OCI-LY7 (cell line): ENCODE measurements at regions of chr9 and their contacts with region 1.

Region 1: GRCh38 chr9:33290247-33291030 is at the start of gene NFX1:
- DNase-seq: peak; percentile 99
- H3K4me3 ChIP-seq: peak within 1 kb of the TSS; percentile 88
- H3K27ac ChIP-seq: peak within 1 kb of the TSS; percentile 97
- H3K4me1 ChIP-seq: peaks cover 62% of the 10 kb centered on the region
- CTCF ChIP-seq: no peak
- total RNA-seq, gene NFX1: 32.3 and 35.8 TPM in 2 replicates

Region 2: DNA sequence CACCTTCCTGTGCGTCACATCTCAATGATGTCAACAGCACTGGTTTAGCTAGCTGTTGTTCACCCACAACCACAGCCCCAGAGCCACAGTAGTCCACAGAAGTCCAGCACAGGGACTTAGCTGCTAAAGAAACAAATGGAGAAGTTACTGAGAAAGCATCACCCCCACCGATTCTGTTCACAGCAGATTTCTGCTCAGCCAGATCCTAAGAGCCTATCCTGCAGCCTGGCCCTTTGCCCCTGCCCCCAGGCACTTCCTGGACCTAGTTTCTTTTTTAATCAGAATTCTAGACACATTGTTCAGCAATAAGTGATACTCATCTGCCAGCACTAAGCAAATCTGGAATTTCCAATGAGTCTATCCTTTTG is 130.7 kb before region 1 on chr9:
- CTCF ChIA-PET with region 1: no interaction called
- POLR2A ChIA-PET with region 1: no interaction called
- intact Hi-C with region 1: loop called (anchors 10 kb)
- DNase-seq: peak; percentile 50
- H3K4me3 ChIP-seq: peak overlapping the region; percentile 58
- H3K27ac ChIP-seq: peak overlapping the region; percentile 86
- H3K4me1 ChIP-seq: peaks cover 83% of the 10 kb centered on the region
- CTCF ChIP-seq: no peak

Region 3: GRCh38 chr9:33264473-33265177 is 25.8 kb before region 1 on chr9 and contains the starts of genes BAG1 and CHMP5:
- CTCF ChIA-PET with region 1: no interaction called
- POLR2A ChIA-PET with region 1: interaction called, 3 read pairs
- intact Hi-C with region 1: loop called (anchors 1 kb)
- DNase-seq: peak; percentile 99
- H3K4me3 ChIP-seq: peak within 1 kb of the TSS; percentile 77
- H3K27ac ChIP-seq: peak within 1 kb of the TSS; percentile 32
- H3K4me1 ChIP-seq: peaks cover 12% of the 10 kb centered on the region
- CTCF ChIP-seq: no peak
- total RNA-seq, gene BAG1: 48.1 and 68.3 TPM in 2 replicates
- total RNA-seq, gene CHMP5: 31.2 and 39.7 TPM in 2 replicates

Region 4: DNA sequence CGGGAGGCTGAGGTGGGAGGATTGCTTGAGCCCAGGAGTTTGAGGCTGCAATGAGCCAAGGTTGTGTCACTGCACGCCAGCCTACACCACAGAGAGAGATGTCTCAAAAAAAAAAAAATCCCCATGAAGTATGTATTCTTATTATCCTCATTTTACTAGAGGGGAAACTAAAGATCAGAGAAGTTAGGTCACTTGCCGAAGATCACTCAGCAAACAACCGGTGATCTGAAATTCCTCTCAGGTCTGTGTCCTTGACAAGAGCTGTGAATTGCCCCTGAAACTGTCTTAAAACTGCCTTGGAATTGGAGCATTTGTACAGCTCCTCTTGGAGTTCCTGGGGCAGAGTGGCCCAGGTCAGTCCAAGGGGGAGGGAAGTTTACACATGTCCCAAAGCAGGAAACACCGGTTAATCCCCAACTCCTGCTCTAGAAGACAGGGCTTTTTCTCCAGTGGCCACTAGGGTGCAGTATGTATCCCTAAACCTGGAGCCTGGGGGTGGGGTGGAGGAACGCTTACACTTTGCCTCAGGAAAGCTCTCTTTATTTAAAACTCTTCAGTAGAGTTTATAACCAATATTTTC is 84.3 kb after region 1 on chr9:
- CTCF ChIA-PET with region 1: no interaction called
- POLR2A ChIA-PET with region 1: interaction called, 4 read pairs
- intact Hi-C with region 1: loop called (anchors 5 kb)
- DNase-seq: peak; percentile 80
- H3K4me3 ChIP-seq: no peak overlapping the region
- H3K27ac ChIP-seq: no peak overlapping the region
- H3K4me1 ChIP-seq: no peaks in the 10 kb centered on the region
- CTCF ChIP-seq: peak; percentile 94

Region 5: DNA sequence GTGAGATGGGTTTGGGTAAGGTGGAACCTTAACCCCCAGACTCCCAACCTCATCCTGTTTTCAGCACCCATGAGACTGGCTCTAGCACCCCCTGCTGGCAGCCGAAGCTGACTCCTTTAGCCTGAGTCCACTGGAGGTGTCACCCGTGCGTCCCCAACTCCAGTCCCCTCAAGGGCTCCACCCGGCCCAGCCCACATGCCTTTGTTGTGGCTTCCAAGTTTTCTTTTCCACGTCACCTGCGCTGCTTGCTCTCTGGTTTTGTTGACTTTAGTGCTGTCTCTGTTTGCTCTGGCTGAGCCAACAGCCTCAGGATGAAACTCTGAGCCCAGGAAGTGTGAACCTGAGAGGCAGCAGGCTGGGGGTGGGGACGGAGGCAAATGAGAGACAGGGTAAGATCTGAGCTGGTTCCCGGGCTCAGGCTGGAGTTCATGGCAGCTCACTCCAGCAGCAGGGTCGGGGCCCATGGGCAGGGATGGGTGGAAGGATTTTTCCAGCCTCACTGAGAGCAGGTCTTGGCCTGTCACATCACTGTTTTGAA is 125.1 kb after region 1 on chr9:
- CTCF ChIA-PET with region 1: no interaction called
- POLR2A ChIA-PET with region 1: no interaction called
- intact Hi-C with region 1: loop called (anchors 1 kb)
- DNase-seq: peak; percentile 81
- H3K4me3 ChIP-seq: no peak overlapping the region
- H3K27ac ChIP-seq: no peak overlapping the region
- H3K4me1 ChIP-seq: peaks cover 14% of the 10 kb centered on the region
- CTCF ChIP-seq: peak; percentile 93

Region 6: DNA sequence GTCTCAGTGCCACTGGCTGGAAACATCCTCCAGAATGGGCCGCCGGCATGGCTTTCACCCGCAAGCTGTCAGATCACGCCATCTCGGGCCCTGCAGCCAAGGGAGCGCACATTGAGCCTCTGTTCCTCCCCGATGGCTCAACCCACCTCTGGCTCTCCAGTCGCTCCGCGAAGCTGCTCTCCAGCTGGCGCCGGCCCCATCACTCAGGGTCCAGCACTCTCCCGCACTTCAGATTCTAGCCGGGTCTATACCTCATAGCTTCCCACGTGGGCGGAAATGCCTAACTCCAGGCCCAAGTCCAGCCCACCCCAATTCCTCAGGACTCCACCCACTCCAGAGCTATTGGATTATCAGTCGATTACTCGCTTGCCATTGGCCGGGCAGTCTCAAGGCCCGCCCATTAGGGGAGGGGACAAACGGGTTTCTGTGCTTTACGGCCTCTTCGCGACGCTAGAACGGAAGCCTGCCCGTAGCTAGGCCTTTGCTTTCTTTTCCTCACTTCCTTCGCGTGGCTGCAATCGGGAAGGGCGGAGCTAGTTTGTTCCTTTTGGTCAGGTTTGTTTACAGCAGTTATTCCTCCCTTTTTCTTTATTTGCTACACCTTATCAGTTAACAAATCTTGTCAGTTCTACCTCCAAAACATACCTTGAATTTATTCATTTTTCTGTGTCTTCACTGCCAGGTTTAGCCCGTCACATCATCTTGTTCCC is 183.4 kb after region 1 on chr9 and contains the start of gene NOL6:
- CTCF ChIA-PET with region 1: no interaction called
- POLR2A ChIA-PET with region 1: no interaction called
- intact Hi-C with region 1: loop called (anchors 5 kb)
- DNase-seq: peak; percentile 99
- H3K4me3 ChIP-seq: peak within 1 kb of the TSS; percentile 85
- H3K27ac ChIP-seq: no peak within 1 kb of the TSS
- H3K4me1 ChIP-seq: peaks cover 12% of the 10 kb centered on the region
- CTCF ChIP-seq: no peak
- total RNA-seq, gene NOL6: 26.4 and 28.8 TPM in 2 replicates

Region 7: DNA sequence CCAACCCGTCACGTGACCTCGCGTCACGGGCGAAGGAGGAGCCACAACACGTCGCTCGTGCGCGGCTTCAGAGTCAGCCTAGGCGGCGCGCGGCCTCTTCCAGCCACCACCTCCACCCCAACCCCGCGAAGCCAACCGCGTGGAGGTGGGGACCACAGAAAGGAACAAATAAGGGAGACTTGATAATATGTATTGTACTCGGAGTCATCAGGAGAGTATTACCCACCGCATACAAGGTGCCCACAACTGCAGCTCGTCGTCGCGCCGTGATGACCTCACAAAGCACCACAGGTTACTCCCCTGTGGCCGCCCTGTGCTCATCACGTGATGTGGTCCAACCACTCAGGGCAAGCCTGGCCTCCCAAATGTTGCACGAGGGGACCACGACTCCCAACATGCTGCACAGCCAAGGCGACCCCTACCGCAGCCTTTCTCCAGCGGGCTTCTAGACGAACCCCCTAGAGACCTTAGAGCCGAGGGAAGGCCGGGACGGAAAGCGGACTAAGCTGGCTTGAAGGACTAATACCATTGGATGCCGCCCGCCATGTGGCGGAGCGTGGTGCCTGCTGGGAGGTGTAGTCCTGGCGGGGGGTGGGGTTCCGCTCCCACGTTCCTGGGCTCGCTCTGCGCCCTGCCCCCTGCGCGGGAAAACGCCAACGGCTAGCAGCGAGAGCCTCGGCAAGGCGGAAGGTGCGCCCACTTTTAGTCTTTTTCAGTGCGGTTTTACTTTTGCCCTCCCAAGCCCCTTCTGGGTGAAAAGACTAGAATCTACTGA is 758.7 kb after region 1 on chr9:
- CTCF ChIA-PET with region 1: no interaction called
- POLR2A ChIA-PET with region 1: no interaction called
- intact Hi-C with region 1: loop called (anchors 10 kb)
- DNase-seq: peak; percentile 99
- H3K4me3 ChIP-seq: peak overlapping the region; percentile 99
- H3K27ac ChIP-seq: peak overlapping the region; percentile 72
- H3K4me1 ChIP-seq: peaks cover 34% of the 10 kb centered on the region
- CTCF ChIP-seq: no peak